Left ventricle myocardium superior (tissue), 1 donor: ENCODE measurements at regions of chr14 and their contacts with region 1.

Region 1: GRCh38 chr14:103910262-103910935 is 17.9 kb upstream of the TDRD9 start:
- DNase-seq: peak; percentile 86
- ATAC-seq: peak; percentile 98

Region 2: DNA sequence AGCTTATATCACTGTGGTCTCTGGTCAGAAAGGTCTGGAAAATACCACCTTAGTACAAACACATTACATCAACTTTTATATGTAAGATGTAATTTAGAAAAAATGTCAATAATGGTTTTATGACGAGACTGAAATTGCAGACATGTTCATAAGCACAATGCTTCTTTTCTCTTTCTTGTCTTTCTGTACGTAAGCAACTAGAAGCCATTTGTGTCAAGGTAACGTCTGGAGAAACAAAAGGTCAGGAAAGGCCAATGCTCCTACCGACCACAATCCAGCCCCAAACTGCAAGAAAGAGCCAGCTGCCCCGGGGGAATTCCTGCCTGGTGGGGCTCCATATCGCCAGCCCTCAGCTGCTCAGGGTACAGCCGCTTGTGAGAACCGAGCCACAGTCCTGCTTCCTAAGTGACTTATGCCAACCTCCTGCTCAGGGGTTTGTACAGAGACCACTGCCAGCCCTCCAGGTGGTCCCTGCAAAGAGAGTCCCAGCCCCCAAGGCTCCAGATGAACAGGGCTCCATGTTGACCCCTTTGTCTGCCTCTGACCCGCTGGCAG is 1584.5 kb before region 1 on chr14:
- intact Hi-C with region 1: no loop called
- DNase-seq: no peak
- ATAC-seq: no peak

Region 3: DNA sequence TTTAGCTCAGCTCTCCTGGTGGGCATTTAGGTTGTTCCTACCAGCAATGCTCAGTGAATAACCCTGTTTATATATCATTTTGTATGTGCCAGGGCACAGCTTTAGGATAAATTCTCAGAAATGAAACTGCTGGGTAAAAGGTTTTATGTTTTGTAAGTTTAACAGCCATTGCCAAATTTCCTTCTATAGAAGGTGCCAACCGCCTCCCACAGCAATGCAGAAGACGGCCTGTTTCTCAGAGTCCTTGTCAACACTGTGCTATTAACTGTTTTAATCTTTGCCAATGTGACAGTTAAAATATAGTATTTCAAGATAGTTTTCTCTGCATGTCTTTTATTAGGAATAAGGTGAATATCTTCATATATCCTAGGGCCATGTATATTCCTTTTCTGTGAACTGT is 128.0 kb before region 1 on chr14:
- intact Hi-C with region 1: no loop called
- DNase-seq: no peak
- ATAC-seq: no peak

Region 4: DNA sequence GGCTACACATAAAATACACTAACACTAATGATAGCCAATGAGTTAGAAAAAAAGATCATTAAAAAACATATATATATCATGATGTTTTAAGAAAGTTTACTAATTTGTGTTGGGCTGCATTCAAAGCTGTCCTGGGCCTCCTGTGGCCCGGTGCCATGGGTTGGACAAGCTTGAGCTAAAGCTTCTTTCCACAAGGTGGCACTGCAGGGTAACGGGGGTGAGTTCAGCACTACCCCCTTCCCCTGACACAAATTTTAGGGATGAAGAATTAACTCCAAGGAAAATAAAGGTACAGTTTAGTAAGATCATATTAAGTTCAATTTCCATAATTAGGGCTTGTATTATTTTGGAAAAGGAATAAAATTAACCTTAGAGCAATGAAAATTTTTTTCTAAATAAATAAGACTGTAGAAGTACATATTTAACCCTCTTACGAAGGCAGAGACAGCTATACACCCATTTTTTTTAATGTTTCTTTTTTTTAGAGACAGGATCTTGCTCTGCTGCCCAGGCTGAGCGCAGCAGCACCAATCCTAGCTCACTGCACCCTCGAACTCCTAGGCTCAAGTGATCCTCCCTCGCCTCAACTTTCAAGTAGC is 101.9 kb before region 1 on chr14:
- intact Hi-C with region 1: loop called (anchors 5 kb)
- DNase-seq: peak; percentile 83
- ATAC-seq: peak; percentile 78

Region 5: DNA sequence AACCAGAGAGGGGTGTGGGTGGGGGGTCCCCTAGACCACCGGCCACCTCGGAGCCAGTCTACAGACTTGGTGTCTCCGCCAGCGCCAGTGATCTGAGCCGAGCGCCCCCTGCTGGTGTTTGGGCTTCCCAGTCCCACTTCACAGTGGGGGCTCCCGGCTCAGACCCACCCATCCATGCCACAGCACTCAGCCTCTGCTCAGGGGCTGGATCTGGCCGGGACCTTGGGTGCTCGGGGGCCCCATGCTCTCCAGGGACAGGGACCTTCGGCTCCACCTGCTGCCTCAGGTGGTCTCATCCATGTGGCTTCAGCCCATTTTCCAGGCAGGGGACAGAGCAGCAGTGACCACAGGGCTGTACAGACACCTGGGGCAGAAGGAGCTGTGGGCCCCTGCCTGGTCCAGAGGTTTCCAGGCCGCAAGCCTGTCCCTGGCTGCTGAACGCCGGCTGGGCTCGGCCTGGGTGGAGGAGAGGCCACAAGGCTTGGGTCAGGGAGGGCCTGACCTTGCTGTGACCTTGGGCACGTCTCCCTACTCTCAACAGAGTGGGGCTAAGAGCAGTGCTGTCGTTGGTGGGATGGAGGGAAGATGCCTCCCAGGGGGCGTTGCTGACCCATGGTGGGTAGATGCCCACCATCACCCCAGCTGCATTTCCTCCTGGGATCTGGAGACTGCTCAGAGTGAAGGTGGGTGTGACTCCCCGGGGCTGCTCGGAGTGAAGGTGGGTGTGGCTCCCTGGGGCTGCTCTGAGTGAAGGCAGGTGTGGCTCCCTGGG is 314.3 kb after region 1 on chr14:
- intact Hi-C with region 1: no loop called
- DNase-seq: peak; percentile 61
- ATAC-seq: peak; percentile 21

Region 6: DNA sequence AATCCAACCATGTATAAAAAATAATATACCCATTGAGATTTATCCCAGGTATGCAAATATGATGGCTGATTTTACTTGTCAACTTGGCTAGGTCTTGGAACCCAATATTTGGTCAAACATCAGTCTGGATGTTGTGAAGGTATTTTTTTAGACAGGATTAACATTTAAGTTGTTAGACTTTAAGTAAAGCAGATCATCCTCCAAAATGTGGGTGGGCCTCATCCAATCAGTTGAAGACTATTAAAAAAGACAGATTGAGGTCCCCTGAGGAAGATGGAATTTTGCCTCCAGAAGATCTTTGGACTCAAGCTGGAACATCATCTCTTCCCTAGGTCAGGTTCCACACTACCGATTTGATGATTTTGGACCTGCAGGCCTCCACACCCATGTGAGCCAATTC is 1887.1 kb after region 1 on chr14:
- intact Hi-C with region 1: no loop called
- DNase-seq: no peak
- ATAC-seq: no peak